Right ventricle myocardium inferior (tissue), 1 donor: ENCODE measurements at regions of chr9 and their contacts with region 1.

Region 1: GRCh38 chr9:77194423-77194822 is 17.1 kb downstream of the VPS13A start:
- DNase-seq: no peak
- ATAC-seq: no peak

Region 2: DNA sequence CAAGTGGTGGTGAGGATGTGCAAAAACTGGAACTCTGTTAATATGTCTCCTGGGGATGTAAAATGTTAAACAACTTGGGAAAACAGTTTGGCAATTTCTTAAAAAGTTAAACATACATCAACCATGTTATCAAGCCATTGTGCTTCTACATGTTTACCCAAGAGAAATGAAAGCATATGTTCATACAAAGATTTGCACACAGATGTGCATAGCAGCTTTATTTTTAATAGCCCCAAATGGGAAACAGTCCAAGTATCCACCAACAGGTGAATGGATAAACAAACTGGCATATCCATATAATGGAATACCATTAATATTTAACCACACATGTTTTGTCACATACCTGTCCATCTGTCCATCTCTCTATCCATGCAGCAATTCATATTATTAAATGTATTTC is 10.8 kb before region 1 on chr9:
- intact Hi-C with region 1: loop called (anchors 1 kb)
- DNase-seq: no peak
- ATAC-seq: no peak

Region 3: GRCh38 chr9:77251050-77251449 is 56.6 kb after region 1 on chr9:
- intact Hi-C with region 1: no loop called
- DNase-seq: no peak
- ATAC-seq: no peak

Region 4: GRCh38 chr9:77402286-77402685 is 207.9 kb after region 1 on chr9:
- intact Hi-C with region 1: no loop called
- DNase-seq: no peak
- ATAC-seq: no peak